Dendritic cell treated with granulocyte-macrophage colony-stimulating factor and Interleukin-4, amounts not matched to agents 40 ng/mL and 50 ng/mL, for 4 days (primary cell): ENCODE measurements at regions of chr18 and their contacts with region 1.

Region 1: GRCh38 chr18:25896178-25896780 is 194.1 kb downstream of the SS18 start:
- H3K4me3 Mint-ChIP-seq: no peak overlapping the region
- H3K27ac Mint-ChIP-seq: no peak overlapping the region
- H3K4me1 Mint-ChIP-seq: no peaks in the 10 kb centered on the region
- H3K27me3 Mint-ChIP-seq: peaks cover 1% of the 10 kb centered on the region

Region 2: GRCh38 chr18:24600076-24600654 is 1296.1 kb before region 1 on chr18:
- intact Hi-C with region 1: loop called (anchors 5 kb)
- H3K4me3 Mint-ChIP-seq: no peak overlapping the region
- H3K27ac Mint-ChIP-seq: no peak overlapping the region
- H3K4me1 Mint-ChIP-seq: no peaks in the 10 kb centered on the region
- H3K27me3 Mint-ChIP-seq: no peaks in the 10 kb centered on the region

Region 3: DNA sequence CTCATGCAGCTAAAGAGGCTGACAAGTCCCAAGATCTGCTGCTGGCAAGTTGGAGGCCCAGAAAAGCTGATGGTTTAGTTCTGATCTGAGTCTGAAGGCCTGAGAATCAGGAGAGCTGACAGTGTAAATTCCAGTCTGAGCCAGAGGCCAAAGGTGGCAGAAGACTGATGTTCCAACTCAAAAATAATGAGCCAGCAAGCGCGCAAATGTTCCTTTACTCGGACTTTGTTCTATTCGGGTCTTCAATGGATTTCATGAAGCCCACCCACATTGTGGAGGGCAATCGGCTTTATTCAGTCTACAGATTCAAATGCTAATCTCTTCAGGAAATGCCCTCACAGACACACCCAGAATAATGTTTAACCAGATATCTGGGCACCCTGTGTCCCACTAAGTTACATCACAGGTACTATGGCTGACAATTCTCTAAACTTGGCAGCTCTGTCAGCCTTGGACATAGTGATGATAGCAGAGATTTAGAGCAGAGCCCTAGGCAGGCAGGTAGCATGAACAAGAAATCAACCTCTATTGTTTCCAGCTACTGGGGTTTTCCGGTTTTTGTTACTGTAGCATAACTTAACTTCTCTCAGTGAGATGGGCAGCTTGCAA is 1117.4 kb before region 1 on chr18:
- intact Hi-C with region 1: no loop called
- H3K4me3 Mint-ChIP-seq: no peak overlapping the region
- H3K27ac Mint-ChIP-seq: no peak overlapping the region
- H3K4me1 Mint-ChIP-seq: no peaks in the 10 kb centered on the region
- H3K27me3 Mint-ChIP-seq: no peaks in the 10 kb centered on the region

Region 4: DNA sequence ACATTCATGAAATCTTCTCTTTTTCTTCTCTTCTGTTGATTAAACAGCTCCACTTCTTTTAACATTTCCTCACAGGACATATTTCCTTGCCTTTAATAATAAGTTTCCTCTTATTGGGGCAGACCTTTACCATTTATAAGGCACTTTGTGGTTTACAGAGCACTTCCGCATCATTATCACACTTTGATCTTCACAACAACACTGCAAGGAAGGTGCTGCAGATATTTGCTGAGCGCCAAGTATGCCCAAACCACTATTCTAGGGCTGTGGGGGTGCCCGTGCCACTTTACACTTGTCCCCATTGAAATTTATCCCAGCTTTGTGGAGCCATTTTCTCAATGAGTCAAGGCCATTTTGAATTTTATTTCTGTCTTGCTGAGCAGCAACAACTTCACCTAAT is 52.5 kb before region 1 on chr18:
- intact Hi-C with region 1: loop called (anchors 10 kb)
- H3K4me3 Mint-ChIP-seq: no peak overlapping the region
- H3K27ac Mint-ChIP-seq: no peak overlapping the region
- H3K4me1 Mint-ChIP-seq: no peaks in the 10 kb centered on the region
- H3K27me3 Mint-ChIP-seq: no peaks in the 10 kb centered on the region